Breast epithelium (tissue), 4 donors: ENCODE measurements at regions of chr4 and their contacts with region 1.

Region 1: DNA sequence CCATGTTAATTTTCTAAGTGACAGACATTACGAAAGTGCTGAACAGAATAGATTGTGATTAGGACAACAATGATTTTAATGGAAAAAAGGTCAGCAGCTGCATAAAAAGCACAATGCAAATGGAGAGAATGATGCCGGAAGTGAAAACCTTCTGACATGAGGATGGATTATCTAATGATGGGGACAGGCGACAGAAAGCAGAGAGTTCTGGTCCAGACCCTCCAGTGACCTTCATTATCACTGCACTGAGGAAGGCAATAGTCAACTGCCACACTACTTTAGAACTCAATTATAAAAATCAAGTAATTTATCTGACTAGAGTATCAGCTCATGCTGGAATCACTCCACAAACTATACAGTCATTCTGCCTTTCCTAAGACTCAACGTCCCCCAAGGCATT is 746.1 kb upstream of the EPHA5 start:
- DNase-seq: no peak
- H3K4me3 ChIP-seq: no peak overlapping the region
- H3K27ac ChIP-seq: no peak overlapping the region
- H3K4me1 ChIP-seq: no peaks in the 10 kb centered on the region
- H3K27me3 ChIP-seq: no peaks in the 10 kb centered on the region
- CTCF ChIP-seq: no peak
- POLR2A ChIP-seq: no peak

Region 2: DNA sequence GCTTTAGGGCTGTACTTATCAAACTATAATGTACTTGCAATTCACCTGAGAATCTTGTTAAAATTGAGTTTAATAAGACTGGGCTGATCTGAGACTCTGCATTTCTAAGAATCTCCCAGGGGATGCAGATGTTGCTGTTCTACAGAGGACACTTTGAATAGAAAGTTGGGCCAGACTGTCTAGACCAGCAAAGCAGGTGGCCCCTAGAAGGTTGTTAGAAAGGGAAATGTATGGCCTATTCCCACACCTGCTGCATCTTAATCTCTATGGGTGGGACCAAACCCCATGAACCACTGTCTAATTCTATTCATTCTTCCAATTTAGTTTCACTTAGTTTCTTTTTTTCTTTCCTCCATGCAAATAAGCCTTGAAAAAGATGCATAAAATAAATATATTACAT is 1594.0 kb before region 1 on chr4:
- intact Hi-C with region 1: loop called (anchors 10 kb)
- DNase-seq: no peak
- H3K4me3 ChIP-seq: no peak overlapping the region
- H3K27ac ChIP-seq: no peak overlapping the region
- H3K4me1 ChIP-seq: no peaks in the 10 kb centered on the region
- H3K27me3 ChIP-seq: no peaks in the 10 kb centered on the region
- CTCF ChIP-seq: no peak
- POLR2A ChIP-seq: no peak

Region 3: DNA sequence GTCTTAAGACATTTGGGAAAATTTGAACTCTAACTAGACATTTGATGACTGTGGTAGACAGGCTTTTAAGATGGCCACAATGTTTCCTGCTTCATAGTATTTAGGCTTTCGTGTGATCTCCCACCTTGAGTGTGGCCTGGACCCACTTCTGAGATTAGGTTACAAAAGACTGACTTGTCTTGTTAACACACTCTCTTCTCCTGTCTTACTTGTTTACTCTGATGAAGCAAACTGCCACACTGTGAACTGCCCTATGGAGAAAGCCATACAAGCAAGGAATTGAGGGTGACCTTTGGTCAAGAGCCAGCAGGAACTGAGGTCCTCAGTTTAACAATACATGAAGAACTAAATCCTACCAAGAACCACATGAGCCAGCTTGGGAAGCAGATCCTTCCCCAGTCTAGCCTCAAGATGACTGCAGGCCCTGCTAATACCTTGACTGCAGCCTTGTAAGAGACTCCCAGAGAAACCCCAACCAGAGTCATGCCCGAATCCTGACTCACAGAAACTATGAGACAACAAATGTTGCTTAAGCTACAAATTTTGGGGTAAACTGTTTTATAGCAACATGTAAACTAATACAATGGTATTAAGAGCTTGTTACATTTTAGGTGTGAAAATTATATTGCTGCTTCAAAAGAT is 1264.3 kb after region 1 on chr4:
- intact Hi-C with region 1: no loop called
- DNase-seq: no peak
- H3K4me3 ChIP-seq: no peak overlapping the region
- H3K27ac ChIP-seq: no peak overlapping the region
- H3K4me1 ChIP-seq: no peaks in the 10 kb centered on the region
- H3K27me3 ChIP-seq: no peaks in the 10 kb centered on the region
- CTCF ChIP-seq: no peak
- POLR2A ChIP-seq: no peak